Heart left ventricle (tissue), 16 donors: ENCODE measurements at regions of chr11 and their contacts with region 1.

Region 1: DNA sequence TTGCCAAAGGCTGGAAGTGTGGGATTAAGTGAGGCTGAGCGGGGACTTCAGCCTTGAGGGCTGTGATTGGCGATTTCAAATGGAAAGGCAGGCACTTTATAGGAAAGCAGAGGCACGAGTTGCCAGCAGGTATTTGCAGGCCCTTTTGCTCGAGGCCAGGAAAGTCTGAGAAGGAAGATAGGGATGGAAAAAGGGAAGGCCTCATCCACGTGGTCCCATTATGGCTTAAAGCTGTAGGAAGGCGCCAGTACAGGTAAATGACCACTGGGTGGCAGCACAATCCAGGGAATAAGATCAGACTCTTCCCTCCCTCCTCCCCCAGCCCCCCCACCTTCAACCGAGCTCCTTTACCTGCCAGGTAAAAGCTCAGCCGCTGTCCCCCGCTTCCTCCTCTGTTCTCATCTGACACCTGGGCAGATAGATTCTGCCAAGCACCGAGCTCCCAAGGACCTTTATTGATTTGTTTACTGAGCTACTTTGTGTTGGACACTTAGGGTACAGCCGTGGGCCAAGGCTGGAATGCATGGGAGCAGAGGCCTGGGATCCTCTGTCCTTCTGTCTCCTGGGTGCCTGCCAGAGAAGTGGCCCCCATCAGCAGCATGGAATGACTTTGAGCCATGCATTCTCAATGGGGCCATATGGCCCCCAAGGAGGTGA is 7.5 kb downstream of the P2RX3 start:
- DNase-seq: peak; percentile 55 to 71 (median 62)
- ATAC-seq: peak; percentile 61 to 82 (median 76)
- H3K4me3 ChIP-seq: no peak overlapping the region
- H3K27ac ChIP-seq: no peak overlapping the region
- H3K4me1 ChIP-seq: peaks cover 0 to 10% (median 4%) of the 10 kb centered on the region in 12 donors
- H3K27me3 ChIP-seq: no peaks in the 10 kb centered on the region
- CTCF ChIP-seq: peak; percentile 78 to 89 (median 82)
- POLR2A ChIP-seq: no peak

Region 2: DNA sequence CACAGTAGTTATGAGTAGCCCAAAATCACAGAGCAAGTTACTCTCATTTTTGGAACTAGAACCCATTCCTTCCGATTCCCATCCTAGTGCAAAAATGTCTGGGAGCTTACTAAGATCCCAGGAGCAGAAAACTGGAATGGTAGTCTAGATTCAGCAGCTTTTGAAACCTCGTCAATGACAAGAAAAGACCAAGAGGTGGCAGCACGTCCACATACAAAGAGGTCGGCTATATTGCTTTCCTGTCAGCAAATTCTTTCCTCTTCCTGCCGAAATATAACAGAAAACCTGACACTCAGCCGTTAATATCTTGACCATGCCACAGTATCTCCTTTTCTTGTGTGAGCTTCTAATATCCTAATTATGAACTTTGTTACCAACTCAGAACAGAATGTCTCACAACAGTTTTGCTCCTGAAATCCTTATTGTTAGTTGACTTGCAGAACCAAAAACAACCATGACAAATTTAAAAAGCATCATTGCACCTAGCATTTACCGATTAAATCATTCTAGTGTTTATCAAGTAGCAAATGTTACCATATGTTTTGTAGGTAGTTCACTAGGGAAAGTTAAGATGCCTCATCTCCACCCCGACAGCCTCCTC is 504.4 kb before region 1 on chr11:
- intact Hi-C with region 1: loop called in 3 of 10 experiments (anchors 5 to 10 kb)
- DNase-seq: peak in 3 of 5 donors; percentile 10 to 25 (median 22)
- ATAC-seq: peak in 1 of 4 donors; percentile 66
- H3K4me3 ChIP-seq: no peak overlapping the region
- H3K27ac ChIP-seq: no peak overlapping the region
- H3K4me1 ChIP-seq: no peaks in the 10 kb centered on the region
- H3K27me3 ChIP-seq: no peaks in the 10 kb centered on the region
- CTCF ChIP-seq: peak; percentile 45 to 81 (median 70)
- POLR2A ChIP-seq: no peak

Region 3: DNA sequence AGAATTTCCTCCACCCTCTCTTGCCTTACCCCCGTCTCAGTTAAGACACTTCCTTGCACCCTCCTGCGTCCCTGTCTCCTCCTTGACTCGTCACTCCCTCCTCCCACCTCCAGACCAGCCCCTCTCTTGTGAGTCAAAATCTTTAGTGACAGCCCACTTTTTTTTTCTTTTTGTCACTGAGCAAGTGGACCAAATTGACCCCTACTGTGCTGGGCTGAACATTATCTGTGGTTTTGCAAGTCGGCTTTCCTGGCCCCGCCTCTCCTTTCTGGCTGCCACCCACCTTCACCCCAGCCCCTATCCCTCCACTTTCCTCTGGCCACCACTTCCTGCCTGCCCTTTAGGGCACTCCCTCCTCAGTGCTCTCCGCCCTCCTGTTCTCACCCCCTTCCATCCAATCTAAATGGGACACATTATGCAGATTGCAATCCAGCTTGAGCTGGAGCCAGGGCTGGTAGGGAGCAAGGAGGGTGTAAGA is 108.4 kb before region 1 on chr11 and contains the start of gene APLNR:
- intact Hi-C with region 1: no loop called
- DNase-seq: no peak
- ATAC-seq: peak in 3 of 4 donors; percentile 44 to 74 (median 55)
- H3K4me3 ChIP-seq: peak within 1 kb of the TSS; percentile 14 to 74 (median 49)
- H3K27ac ChIP-seq: peak within 1 kb of the TSS; percentile 15 to 80 (median 65)
- H3K4me1 ChIP-seq: peaks cover 0 to 47% (median 14%) of the 10 kb centered on the region in 12 donors
- H3K27me3 ChIP-seq: peaks cover 0 to 36% (median 0%) of the 10 kb centered on the region in 9 donors
- CTCF ChIP-seq: no peak
- POLR2A ChIP-seq: no peak
- total RNA-seq, gene APLNR: 5.7 to 63.3 (median 9.9) TPM

Region 4: GRCh38 chr11:57426929-57427726 is 81.4 kb after region 1 on chr11 and contains the start of gene SLC43A3:
- intact Hi-C with region 1: loop called in 2 of 10 experiments (anchors 5 kb)
- DNase-seq: peak; percentile 78 to 85 (median 81)
- ATAC-seq: peak; percentile 63 to 72 (median 68)
- H3K4me3 ChIP-seq: peak within 1 kb of the TSS; percentile 30 to 79 (median 59)
- H3K27ac ChIP-seq: peak within 1 kb of the TSS; percentile 88 to 98 (median 92)
- H3K4me1 ChIP-seq: peaks cover 6 to 82% (median 54%) of the 10 kb centered on the region in 12 donors
- H3K27me3 ChIP-seq: no peaks in the 10 kb centered on the region
- CTCF ChIP-seq: peak in 2 of 12 donors; percentile 4 to 21
- POLR2A ChIP-seq: peak in 1 of 2 donors; percentile 28
- total RNA-seq, gene SLC43A3: 13.5 to 56.9 (median 24.7) TPM

Region 5: GRCh38 chr11:57480409-57481137 is 134.9 kb after region 1 on chr11:
- intact Hi-C with region 1: loop called (anchors 2 to 10 kb)
- DNase-seq: peak; percentile 58 to 81 (median 62)
- ATAC-seq: peak; percentile 17 to 54 (median 36)
- H3K4me3 ChIP-seq: no peak overlapping the region
- H3K27ac ChIP-seq: no peak overlapping the region
- H3K4me1 ChIP-seq: peaks cover 3 to 35% (median 22%) of the 10 kb centered on the region in 12 donors
- H3K27me3 ChIP-seq: peaks cover 0 to 36% (median 13%) of the 10 kb centered on the region in 9 donors
- CTCF ChIP-seq: peak; percentile 53 to 82 (median 68)
- POLR2A ChIP-seq: no peak

Region 6: GRCh38 chr11:57530596-57531507 is 185.2 kb after region 1 on chr11 and contains the start of gene TIMM10:
- intact Hi-C with region 1: loop called in 7 of 10 experiments (anchors 2 to 5 kb)
- DNase-seq: peak; percentile 94 to 97 (median 96)
- ATAC-seq: peak; percentile 97 to 99 (median 98)
- H3K4me3 ChIP-seq: peak within 1 kb of the TSS; percentile 55 to 91 (median 72)
- H3K27ac ChIP-seq: peak within 1 kb of the TSS in 11 of 12 donors; percentile 39 to 81 (median 73)
- H3K4me1 ChIP-seq: peaks cover 0 to 21% (median 11%) of the 10 kb centered on the region in 12 donors
- H3K27me3 ChIP-seq: no peaks in the 10 kb centered on the region
- CTCF ChIP-seq: no peak
- POLR2A ChIP-seq: peak in 1 of 2 donors; percentile 25
- total RNA-seq, gene TIMM10: 36.6 to 81.5 (median 46.4) TPM

Region 7: GRCh38 chr11:58513747-58514367 is 1168.2 kb after region 1 on chr11:
- intact Hi-C with region 1: loop called in 4 of 10 experiments (anchors 10 kb)
- DNase-seq: no peak
- ATAC-seq: peak in 3 of 4 donors; percentile 65 to 74 (median 73)
- H3K4me3 ChIP-seq: no peak overlapping the region
- H3K27ac ChIP-seq: no peak overlapping the region
- H3K4me1 ChIP-seq: peaks cover 0 to 3% (median 0%) of the 10 kb centered on the region in 12 donors
- H3K27me3 ChIP-seq: peaks cover 0 to 5% (median 0%) of the 10 kb centered on the region in 9 donors
- CTCF ChIP-seq: peak; percentile 42 to 76 (median 68)
- POLR2A ChIP-seq: no peak